Heart right ventricle (tissue), 16 donors: ENCODE measurements at regions of chr18 and their contacts with region 1.

Region 1: GRCh38 chr18:66682855-66683322 is 79.0 kb upstream of the CDH19 start:
- DNase-seq: peak in 1 of 2 donors; percentile 16
- ATAC-seq: peak; percentile 61 to 91 (median 80)
- H3K4me3 ChIP-seq: peak overlapping the region in 9 of 10 donors; percentile 0 to 46 (median 33)
- H3K27ac ChIP-seq: peak overlapping the region in 9 of 10 donors; percentile 18 to 77 (median 68)
- H3K4me1 ChIP-seq: peaks cover 0 to 10% (median 0%) of the 10 kb centered on the region in 9 donors
- H3K27me3 ChIP-seq: no peaks in the 10 kb centered on the region
- CTCF ChIP-seq: no peak

Region 2: DNA sequence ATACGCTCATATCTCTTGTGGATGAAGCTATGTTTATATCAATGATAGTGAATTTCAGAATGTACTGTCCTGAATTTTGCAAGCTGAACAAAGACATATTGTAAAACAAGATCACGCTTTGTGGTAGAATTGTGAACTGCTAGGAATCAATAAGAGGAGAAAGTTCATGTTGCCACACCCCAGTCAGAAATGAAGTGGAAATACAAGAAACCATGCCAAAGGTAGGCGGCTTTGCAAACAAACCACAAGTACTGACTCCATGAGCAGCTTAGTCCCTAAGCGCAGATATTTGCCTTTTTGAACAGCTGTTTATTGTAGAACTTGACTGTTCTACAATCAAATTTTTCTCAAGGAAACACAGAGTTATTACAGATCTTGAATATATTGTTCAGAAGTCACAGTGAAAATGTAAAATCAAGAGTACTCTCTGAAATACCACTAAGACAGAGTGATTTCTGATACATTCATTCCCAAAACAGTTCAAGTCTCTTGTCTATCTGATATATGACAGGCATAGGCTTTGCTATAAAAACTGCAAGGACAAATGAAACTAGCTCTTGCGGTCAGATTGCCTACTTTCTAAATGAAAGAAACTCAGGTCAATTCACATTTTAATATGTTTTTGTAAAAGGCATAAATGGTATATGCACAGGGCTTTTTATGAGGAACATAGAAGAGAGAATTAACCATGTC is 41.9 kb after region 1 on chr18:
- intact Hi-C with region 1: loop called in 1 of 10 experiments (anchors 5 kb)
- DNase-seq: peak in 1 of 2 donors; percentile 45
- ATAC-seq: peak; percentile 65 to 88 (median 82)
- H3K4me3 ChIP-seq: no peak overlapping the region
- H3K27ac ChIP-seq: peak overlapping the region in 9 of 10 donors; percentile 6 to 82 (median 64)
- H3K4me1 ChIP-seq: peaks cover 0 to 4% (median 0%) of the 10 kb centered on the region in 9 donors
- H3K27me3 ChIP-seq: no peaks in the 10 kb centered on the region
- CTCF ChIP-seq: no peak

Region 3: GRCh38 chr18:66742832-66743231 is 59.9 kb after region 1 on chr18:
- intact Hi-C with region 1: no loop called
- DNase-seq: no peak
- ATAC-seq: no peak
- H3K4me3 ChIP-seq: no peak overlapping the region
- H3K27ac ChIP-seq: peak overlapping the region in 2 of 10 donors; percentile 9 to 10
- H3K4me1 ChIP-seq: no peaks in the 10 kb centered on the region
- H3K27me3 ChIP-seq: no peaks in the 10 kb centered on the region
- CTCF ChIP-seq: no peak